AG04450 (cell line): ENCODE measurements at regions of chr20 and their contacts with region 1.

Region 1: DNA sequence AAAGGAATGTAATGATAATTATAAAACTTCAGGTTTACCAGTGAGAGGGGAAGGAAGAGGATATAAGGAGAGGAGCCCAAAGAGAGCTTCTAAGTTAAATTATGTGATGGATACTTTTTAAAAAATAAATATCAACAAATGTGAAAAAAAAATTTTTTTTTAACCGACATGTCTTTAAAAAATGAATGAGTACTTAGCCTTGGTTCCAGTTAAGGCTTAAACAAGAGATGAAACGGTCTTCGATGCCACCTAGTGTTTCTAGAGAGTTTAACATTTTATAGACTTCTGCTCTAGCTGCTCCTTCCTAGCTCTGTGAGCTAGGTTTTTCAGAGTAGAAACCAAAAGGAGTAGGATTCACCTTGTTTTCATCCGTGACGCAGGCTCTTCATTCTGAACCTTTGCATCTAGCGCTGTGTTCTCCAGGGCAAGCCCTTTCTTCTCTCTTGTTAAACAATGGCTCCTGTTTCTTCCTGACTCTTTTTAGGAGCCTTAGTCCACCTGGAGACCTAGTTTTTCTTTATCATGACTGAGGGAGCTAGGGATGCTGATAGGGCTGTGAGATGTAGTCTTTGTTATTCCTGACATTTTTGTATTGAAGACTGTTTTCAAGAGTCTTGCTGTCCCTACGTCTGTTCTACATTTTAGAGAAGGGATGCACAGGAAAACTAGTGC is 42.4 kb upstream of the GNRH2 start:
- DNase-seq: peak; percentile 37
- H3K4me3 ChIP-seq: no peak overlapping the region
- H3K27ac ChIP-seq: no peak overlapping the region
- H3K27me3 ChIP-seq: no peaks in the 10 kb centered on the region
- CTCF ChIP-seq: peak; percentile 62

Region 2: DNA sequence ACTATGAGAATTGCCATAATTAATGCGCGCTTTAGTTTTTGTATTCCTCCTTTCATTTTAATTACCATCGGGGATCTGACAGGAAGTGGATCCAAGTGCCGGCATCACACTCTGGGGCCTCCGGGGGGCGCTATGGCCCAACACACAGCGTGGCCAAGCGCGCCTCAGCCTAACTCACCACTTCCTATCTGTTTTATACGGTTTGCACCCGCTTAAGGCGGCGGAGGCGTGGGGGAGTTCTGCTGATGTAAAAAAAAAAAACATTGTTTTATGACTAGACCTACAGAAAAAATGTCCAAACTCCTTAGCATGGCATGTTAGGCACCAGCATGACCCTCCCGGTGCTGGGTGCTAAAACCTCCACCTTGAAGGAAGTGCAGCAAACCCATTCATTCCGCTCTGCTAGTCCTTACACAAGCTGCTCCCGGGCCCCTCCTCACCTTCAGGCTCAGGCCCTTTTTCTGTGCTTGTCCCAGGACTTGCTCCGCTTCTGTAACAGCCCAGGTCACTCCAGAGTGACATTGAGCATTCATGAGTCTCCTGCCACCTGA is 312.9 kb before region 1 on chr20:
- CTCF ChIA-PET with region 1: interaction called, 15 read pairs
- POLR2A ChIA-PET with region 1: no interaction called
- DNase-seq: no peak
- H3K4me3 ChIP-seq: no peak overlapping the region
- H3K27ac ChIP-seq: no peak overlapping the region
- H3K27me3 ChIP-seq: peaks cover 41% of the 10 kb centered on the region
- CTCF ChIP-seq: peak; percentile 70

Region 3: DNA sequence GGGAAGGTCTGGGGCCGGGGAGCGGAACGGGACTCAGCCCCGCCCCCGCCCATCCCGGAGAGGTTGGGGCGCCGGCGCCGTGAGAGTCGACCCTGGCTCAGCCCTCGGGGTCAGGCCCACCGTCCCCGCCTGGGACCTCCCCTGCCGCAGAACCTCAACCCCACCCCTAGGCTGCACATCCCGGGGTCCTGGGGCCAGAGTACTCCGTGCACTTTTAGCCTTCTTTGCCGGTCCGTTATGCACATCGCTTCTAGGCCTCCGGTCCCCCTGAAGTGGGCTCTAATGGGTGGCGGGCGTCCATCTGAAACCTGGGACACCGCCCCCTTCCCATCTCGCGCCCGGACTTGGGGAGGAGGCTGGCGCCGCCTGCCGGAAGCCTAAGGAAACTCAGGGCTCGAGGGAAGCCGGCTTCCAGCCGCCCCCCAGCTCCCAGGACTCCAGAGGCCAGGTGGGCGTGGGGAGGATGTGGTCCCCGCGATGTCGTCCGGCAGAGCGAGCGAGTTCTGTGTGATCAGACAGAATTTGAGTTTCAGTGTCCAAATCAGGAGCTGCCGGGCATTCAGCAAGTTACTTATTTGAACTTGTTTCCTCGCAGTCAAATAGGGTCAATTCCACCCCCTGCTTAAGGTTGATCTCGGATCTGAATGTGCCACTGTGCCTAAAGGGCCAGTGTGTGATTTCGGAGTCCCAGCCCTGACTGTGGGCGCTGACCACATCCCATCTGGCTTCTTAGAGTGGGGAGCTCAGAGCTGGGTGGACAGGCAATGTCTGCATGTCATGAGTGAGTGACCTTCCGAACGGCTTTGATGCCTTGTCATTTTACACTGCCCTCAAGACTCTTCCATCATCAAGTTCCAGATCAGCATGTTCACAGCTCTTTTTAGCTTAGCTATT is 248.2 kb before region 1 on chr20:
- CTCF ChIA-PET with region 1: interaction called, 17 read pairs
- POLR2A ChIA-PET with region 1: no interaction called
- DNase-seq: no peak
- H3K4me3 ChIP-seq: peak overlapping the region; percentile 50
- H3K27ac ChIP-seq: no peak overlapping the region
- H3K27me3 ChIP-seq: peaks cover 72% of the 10 kb centered on the region
- CTCF ChIP-seq: peak; percentile 78

Region 4: DNA sequence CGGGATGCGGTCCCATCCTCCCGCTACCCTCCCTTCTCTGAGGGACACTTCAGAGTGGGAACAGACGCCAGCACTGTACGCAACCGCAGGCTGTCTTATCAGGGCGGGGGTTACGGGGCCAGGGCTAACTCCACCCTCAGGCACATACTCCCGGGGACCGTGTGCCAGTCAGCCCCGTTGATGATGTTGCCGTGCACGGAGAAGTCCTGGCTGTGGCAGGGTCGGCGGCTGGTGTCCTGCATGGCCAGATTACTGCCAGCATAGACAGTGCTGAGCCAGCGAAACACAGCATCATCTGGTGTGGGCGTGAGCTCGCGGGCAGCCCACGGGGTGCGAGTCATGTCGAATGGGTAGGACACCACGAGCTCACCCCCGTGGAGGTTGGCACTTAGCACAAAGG is 205.5 kb before region 1 on chr20:
- CTCF ChIA-PET with region 1: no interaction called
- POLR2A ChIA-PET with region 1: no interaction called
- DNase-seq: no peak
- H3K4me3 ChIP-seq: no peak overlapping the region
- H3K27ac ChIP-seq: no peak overlapping the region
- H3K27me3 ChIP-seq: peaks cover 23% of the 10 kb centered on the region
- CTCF ChIP-seq: no peak

Region 5: GRCh38 chr20:2859330-2860121 is 141.5 kb before region 1 on chr20:
- CTCF ChIA-PET with region 1: interaction called, 11 read pairs
- POLR2A ChIA-PET with region 1: no interaction called
- DNase-seq: no peak
- H3K4me3 ChIP-seq: no peak overlapping the region
- H3K27ac ChIP-seq: no peak overlapping the region
- H3K27me3 ChIP-seq: no peaks in the 10 kb centered on the region
- CTCF ChIP-seq: no peak

Region 6: DNA sequence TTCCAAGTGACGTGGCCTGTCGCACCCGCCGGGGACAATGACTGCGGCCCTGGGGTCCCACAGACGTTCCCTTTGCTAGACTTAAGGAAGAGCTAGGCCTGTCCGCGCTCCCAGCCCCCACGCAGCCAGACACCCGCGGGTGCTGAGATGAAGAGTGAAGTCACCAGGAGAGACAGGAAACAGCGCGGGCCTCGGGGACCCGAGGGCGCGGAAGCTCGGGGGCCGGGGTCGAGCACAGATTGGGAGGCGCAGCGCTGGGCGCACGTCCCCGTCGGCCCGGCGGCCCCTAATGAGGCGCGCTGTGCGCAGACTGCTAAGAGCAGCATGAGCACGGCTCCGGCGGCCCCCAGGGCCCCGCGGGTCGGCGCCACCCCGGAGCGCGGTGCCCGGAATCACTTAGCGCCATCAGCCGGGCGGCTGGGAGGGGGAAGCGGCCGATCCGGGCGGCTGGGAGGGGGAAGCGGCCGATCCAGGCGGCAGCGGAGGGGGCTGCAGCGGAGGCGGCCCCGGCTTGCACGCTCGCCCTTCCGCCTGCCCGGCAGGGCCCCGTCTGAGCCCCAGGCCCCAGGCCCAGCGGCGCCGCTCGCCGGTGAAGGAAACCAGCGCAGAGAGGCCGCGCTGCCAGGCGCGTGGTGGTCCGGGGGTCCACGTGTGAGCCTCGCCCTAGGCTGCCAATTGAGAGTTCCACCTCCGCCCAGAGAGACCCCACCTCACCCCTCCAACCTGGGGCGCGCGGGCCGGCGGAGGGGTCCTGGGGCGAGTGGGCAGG is 91.8 kb after region 1 on chr20:
- CTCF ChIA-PET with region 1: no interaction called
- POLR2A ChIA-PET with region 1: no interaction called
- DNase-seq: no peak
- H3K4me3 ChIP-seq: peak overlapping the region; percentile 22; the same call in 1 of the 2 replicates
- H3K27ac ChIP-seq: no peak overlapping the region
- H3K27me3 ChIP-seq: peaks cover 16% of the 10 kb centered on the region
- CTCF ChIP-seq: no peak

Region 7: GRCh38 chr20:3686867-3687321 is 685.9 kb after region 1 on chr20:
- CTCF ChIA-PET with region 1: no interaction called
- POLR2A ChIA-PET with region 1: no interaction called
- DNase-seq: peak; percentile 82
- H3K4me3 ChIP-seq: no peak overlapping the region
- H3K27ac ChIP-seq: peak overlapping the region; percentile 69
- H3K27me3 ChIP-seq: no peaks in the 10 kb centered on the region
- CTCF ChIP-seq: peak; percentile 33